Activated CD4-positive, alpha-beta memory T cell treated with anti-CD3 and anti-CD28 coated beads for 36 hours (primary cell): ENCODE measurements at regions of chr3 and their contacts with region 1.

Region 1: DNA sequence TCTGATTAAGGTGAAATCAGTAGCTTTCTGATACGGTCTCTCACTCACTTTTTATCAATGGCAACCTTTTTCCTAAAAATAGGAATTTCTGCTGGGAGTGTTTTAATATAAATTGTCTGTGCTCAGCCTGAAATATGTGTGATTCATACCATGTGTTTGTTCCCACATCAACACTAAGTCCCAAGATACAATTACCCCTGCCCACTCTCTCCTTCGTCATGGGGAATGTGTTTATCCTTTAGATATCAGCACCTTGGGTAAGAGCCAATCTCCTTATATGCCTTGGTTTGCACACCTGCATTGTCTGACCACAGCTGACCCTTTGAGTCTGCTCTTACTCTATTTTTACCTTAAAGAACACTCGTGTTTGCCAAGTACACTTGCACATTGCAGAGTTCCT is 356.4 kb downstream of the LPP start:
- DNase-seq: no peak
- H3K4me3 Mint-ChIP-seq: no peak overlapping the region
- H3K27ac Mint-ChIP-seq: no peak overlapping the region
- H3K4me1 Mint-ChIP-seq: peaks cover 4% of the 10 kb centered on the region
- H3K27me3 Mint-ChIP-seq: no peaks in the 10 kb centered on the region

Region 2: GRCh38 chr3:188389711-188390342 is 120.5 kb before region 1 on chr3:
- CTCF ChIA-PET with region 1: no interaction called
- POLR2A ChIA-PET with region 1: no interaction called
- intact Hi-C with region 1: loop called (anchors 10 kb)
- DNase-seq: peak; percentile 74
- H3K4me3 Mint-ChIP-seq: no peak overlapping the region
- H3K27ac Mint-ChIP-seq: peak overlapping the region; percentile 50
- H3K4me1 Mint-ChIP-seq: peaks cover 27% of the 10 kb centered on the region
- H3K27me3 Mint-ChIP-seq: no peaks in the 10 kb centered on the region

Region 3: DNA sequence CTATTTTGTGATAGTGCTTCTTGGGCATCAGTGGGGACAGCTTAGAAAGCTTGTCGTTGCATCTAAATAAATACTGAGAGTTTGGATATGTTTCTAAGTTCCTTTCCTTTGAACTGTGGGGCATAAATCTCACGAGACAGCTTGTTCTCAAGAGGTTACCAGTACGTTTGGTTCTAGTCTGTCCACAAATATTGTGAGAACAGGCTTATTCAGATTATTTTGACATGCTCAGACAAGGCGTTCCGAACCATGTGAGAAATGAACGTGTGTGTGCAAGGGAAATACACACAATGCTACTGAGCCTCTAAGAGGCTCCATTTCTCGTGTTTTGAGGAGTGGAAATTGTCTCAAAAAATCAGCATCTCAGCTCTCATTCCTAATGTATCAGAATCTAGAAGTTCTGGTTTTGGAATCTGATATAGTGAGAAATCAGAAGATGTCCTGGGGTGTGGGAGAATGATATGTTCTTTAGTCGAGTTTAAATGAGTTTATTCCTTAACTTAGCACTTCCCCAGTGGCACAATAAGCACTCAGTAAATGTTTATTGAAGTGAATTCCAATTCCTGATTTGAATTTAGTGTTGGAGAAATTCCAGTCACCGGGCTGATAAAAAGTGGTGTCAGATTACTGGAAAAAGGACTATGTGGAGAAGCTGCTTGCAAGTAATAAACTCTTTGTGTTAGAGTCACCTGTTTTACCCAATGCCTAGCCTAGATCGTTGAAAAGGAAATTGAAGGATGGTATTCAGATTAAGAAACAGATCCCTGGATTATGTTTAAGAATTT is 125.1 kb after region 1 on chr3:
- CTCF ChIA-PET with region 1: no interaction called
- POLR2A ChIA-PET with region 1: no interaction called
- intact Hi-C with region 1: no loop called
- DNase-seq: no peak
- H3K4me3 Mint-ChIP-seq: no peak overlapping the region
- H3K27ac Mint-ChIP-seq: no peak overlapping the region
- H3K4me1 Mint-ChIP-seq: no peaks in the 10 kb centered on the region
- H3K27me3 Mint-ChIP-seq: no peaks in the 10 kb centered on the region